Activated T-helper 2 cell treated with anti-CD3 and anti-CD28 coated beads, Interferon-gamma antibody, Interleukin-2, Interleukin-4, amounts not matched to agents 10 μg/mL and 5 μg/mL and 100 μg/mL, durations not matched to agents 14 hours and 24 hours and 36 hours (primary cell): ENCODE measurements at regions of chr9 and their contacts with region 1.

Region 1: DNA sequence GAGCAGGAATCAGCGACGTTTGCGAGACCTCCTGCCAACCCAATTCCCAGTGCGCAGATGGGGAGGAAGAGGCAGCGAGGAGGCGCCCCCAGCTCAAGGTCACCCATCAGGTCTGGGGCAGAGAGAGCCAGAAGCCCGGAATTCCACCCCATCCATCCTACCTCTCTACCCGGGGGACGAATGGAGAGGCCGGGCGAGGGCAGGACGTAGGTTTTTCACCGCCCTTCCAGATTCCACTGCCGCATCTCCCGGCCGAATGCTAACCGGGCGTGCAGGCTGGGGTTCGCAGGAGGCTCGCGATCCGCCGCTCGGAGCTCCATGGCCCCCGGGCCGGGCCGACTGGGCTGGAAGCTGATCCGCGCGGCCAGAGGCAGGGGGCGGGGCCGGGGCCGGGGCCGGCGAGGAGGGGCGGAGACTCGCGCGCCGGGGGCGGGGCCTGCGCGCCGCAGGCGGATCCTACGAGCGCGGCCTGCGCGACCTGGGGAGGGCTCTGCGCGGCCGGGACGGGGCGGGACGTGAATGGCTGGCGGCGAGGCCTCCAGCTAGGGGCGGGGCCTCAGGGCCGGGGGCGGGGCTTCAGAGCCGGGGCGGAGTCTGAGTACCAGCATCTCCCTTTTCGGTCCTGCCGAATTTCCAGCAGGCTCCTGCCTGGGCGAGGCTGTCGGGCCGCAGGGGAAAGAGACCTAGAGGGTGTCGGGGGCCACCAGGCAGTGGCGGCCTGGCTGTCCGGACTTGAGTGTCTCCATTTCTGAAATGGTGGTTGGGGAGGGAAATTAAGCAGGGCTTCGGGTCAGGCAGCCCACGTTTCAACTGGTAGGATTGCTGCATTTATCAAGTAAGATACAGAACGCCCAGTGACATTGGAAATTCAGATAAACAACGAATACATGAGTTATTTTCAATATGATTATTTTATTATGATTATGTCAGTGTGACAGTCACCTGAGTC is at the start of gene ST6GALNAC4:
- DNase-seq: peak; percentile 90
- H3K4me3 Mint-ChIP-seq: peak within 1 kb of the TSS; percentile 80
- H3K27ac Mint-ChIP-seq: peak within 1 kb of the TSS; percentile 81
- H3K4me1 Mint-ChIP-seq: peaks cover 40% of the 10 kb centered on the region
- H3K27me3 Mint-ChIP-seq: peaks cover under 1% of the 10 kb centered on the region
- total RNA-seq, gene ST6GALNAC4: 25.6 and 28.7 TPM in 2 replicates

Region 2: DNA sequence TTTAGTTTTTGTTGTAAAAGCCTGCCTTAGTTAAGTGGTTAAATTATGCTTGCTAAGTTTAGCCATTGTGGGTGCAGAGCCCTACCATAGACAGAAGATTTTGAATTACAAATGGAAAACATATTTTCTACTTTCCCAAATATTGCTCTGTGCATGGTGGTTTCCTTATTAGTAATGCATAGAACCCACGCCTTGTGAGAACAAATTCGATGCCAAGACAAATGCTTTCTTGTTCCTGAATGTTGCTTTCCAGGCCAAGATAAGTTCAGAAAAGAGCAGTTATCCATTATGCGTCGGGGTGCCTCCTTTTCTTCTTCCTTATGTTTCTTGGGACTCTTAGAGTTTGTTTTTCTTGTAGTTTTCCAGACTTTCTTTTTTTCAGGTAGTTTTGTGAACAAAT is 683.4 kb before region 1 on chr9:
- intact Hi-C with region 1: no loop called
- DNase-seq: no peak
- H3K4me3 Mint-ChIP-seq: no peak overlapping the region
- H3K27ac Mint-ChIP-seq: no peak overlapping the region
- H3K4me1 Mint-ChIP-seq: no peaks in the 10 kb centered on the region
- H3K27me3 Mint-ChIP-seq: peaks cover 30% of the 10 kb centered on the region

Region 3: DNA sequence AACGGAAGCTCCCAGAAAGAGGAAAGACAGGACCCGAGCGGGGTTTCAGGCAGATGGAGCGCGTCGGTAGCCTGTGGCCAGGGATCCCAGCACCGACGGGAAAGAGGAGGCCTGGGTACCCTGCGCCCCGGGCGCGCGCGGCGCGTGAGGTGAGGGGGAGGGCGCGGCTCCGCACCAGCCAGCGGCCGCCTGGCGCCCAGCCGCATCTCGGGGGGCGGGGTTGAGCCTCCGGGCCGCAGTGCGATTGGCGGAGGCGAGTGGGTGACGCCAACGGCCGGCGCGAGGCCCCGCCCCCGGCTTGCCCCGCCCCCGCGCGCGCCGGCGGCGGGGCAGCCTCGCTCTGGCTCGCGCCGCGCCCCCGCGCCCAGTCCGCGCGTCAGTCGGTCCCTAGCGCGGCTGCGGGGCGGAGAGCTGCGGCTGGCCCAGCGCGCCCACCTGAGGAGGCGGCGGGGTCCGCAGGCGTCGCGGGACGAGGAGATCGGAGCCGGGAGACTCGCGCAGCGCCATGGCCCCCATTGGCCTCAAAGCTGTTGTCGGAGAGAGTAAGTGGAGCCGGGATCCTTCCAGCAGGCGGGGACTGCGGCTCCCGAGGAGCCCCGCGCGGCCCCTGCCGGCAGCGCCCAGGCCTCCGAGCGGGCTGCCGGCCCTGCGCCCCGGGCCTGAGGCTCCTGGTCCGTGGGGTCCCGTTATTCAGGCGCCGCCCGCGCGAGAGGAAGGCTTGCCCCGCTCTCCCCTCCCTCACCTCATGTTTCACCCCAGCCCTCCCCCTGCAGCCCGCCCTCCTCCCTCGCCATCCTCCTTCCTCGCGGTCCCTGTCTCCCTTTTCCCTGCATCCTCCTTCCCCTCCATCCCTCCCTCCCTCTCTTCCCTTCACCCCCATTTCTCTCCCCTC is 304.8 kb before region 1 on chr9 and contains the start of gene STXBP1:
- intact Hi-C with region 1: loop called (anchors 10 kb)
- DNase-seq: peak; percentile 87
- H3K4me3 Mint-ChIP-seq: peak within 1 kb of the TSS; percentile 93
- H3K27ac Mint-ChIP-seq: peak within 1 kb of the TSS; percentile 84
- H3K4me1 Mint-ChIP-seq: peaks cover 27% of the 10 kb centered on the region
- H3K27me3 Mint-ChIP-seq: peaks cover 35% of the 10 kb centered on the region
- total RNA-seq, gene STXBP1: 44.5 and 48.9 TPM in 2 replicates

Region 4: DNA sequence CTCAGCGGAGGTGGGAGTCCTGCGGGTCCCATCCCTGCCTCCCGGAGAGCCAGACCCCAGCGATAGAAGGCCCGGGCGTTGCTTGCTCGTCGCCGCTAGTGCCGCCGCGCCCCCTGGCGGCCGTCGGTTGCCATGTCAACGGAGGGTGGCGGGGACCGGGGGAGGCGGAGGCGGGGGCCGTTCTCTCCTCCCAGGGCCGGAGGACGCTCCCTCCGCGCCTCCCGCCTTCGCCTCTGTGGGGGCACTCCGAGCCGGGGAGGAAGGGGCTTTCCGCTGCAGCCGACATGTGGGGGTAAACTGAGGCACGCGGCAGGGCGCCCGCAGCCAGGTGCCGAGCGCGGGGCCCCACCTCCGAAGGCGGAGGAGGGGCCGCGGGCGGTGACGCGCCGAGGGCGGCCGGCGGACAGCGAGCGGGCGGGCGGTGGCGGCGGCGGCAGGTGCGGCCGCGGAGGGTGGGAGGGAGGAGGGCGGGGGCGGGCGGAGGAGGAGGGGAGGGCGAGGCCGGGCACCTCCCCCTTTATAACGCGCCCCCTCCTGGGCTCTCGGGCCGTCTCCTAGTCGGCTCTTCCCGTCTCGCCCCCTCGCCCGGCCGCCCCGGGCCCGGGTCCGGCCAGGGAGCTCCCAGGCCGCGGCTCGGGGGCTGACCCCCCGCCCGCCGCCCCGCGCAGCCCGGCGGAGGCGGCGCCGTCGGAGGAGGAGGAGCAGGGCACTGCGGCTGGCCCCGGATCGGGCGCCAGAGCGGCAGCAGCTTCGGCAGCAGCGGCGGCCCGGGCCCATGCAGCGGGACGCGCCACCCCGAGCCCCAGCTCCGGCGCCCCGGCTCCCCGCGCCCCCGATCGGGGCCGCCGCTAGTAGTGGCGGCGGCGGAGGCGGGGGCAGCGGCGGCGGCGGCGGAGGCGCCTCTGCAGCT is 131.7 kb before region 1 on chr9:
- intact Hi-C with region 1: loop called (anchors 5 kb)
- DNase-seq: peak; percentile 88
- H3K4me3 Mint-ChIP-seq: peak overlapping the region; percentile 97
- H3K27ac Mint-ChIP-seq: peak overlapping the region; percentile 86
- H3K4me1 Mint-ChIP-seq: peaks cover 56% of the 10 kb centered on the region
- H3K27me3 Mint-ChIP-seq: no peaks in the 10 kb centered on the region

Region 5: GRCh38 chr9:127802576-127803443 is 114.1 kb before region 1 on chr9 and contains the start of gene FPGS:
- intact Hi-C with region 1: loop called (anchors 2 kb)
- DNase-seq: peak; percentile 78
- H3K4me3 Mint-ChIP-seq: peak within 1 kb of the TSS; percentile 96
- H3K27ac Mint-ChIP-seq: peak within 1 kb of the TSS; percentile 96
- H3K4me1 Mint-ChIP-seq: peaks cover 24% of the 10 kb centered on the region
- H3K27me3 Mint-ChIP-seq: no peaks in the 10 kb centered on the region
- total RNA-seq, gene FPGS: 116 and 137 TPM in 2 replicates

Region 6: GRCh38 chr9:127869310-127870152 is 47.4 kb before region 1 on chr9:
- intact Hi-C with region 1: loop called (anchors 5 kb)
- DNase-seq: peak; percentile 69
- H3K4me3 Mint-ChIP-seq: no peak overlapping the region
- H3K27ac Mint-ChIP-seq: no peak overlapping the region
- H3K4me1 Mint-ChIP-seq: peaks cover 12% of the 10 kb centered on the region
- H3K27me3 Mint-ChIP-seq: no peaks in the 10 kb centered on the region

Region 7: GRCh38 chr9:127903557-127904475 is 13.1 kb before region 1 on chr9:
- intact Hi-C with region 1: loop called (anchors 2 kb)
- DNase-seq: peak; percentile 83
- H3K4me3 Mint-ChIP-seq: peak overlapping the region; percentile 88
- H3K27ac Mint-ChIP-seq: peak overlapping the region; percentile 99
- H3K4me1 Mint-ChIP-seq: peaks cover 34% of the 10 kb centered on the region
- H3K27me3 Mint-ChIP-seq: no peaks in the 10 kb centered on the region